B cell (primary cell): ENCODE measurements at regions of chr9 and their contacts with region 1.

Region 1: DNA sequence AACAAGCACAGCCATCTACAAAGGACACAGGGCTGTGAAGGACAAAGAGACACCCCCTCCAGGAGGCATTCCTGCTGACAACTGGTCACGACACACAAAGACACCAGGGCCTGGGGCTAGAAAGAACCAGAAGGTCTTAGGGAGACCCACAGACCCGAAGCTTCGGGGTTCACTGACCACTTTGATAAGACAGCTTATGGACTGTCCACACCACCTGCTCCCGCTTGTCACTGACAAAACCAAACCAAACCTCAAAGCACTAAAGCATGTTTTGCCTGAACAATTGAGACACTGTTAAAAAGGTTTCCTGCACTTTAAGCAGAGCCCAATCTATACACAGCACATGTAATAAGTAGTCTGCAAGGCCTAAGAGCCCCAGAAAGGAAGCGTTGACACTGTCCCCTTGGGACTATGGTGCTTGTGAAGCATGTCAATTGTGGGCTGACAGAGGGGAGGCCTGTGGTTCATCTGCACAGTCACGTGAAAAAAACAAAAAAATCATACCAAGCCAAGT is 185.0 kb downstream of the GAPVD1 start:
- DNase-seq: peak; percentile 94
- ATAC-seq: peak; percentile 100
- H3K4me3 ChIP-seq: peak overlapping the region in 1 of 5 experiments; percentile 14
- H3K4me3 Mint-ChIP-seq: peak overlapping the region; percentile 71
- H3K27ac ChIP-seq: peak overlapping the region in 1 of 2 donors; percentile 11
- H3K27ac Mint-ChIP-seq: peak overlapping the region; percentile 83
- H3K4me1 ChIP-seq: peaks cover 35 to 43% of the 10 kb centered on the region in 2 donors
- H3K4me1 Mint-ChIP-seq: peaks cover 43% of the 10 kb centered on the region
- H3K27me3 ChIP-seq: no peaks in the 10 kb centered on the region
- H3K27me3 Mint-ChIP-seq: no peaks in the 10 kb centered on the region
- CTCF ChIP-seq: no peak

Region 2: GRCh38 chr9:124940693-124941453 is 505.8 kb before region 1 on chr9 and contains the start of gene GOLGA1:
- CTCF ChIA-PET with region 1: no interaction called
- POLR2A ChIA-PET with region 1: no interaction called
- intact Hi-C with region 1: loop called (anchors 5 kb)
- DNase-seq: peak; percentile 98
- ATAC-seq: peak; percentile 88
- H3K4me3 ChIP-seq: peak within 1 kb of the TSS; percentile 73 to 95 (median 91)
- H3K4me3 Mint-ChIP-seq: peak within 1 kb of the TSS; percentile 85
- H3K27ac ChIP-seq: peak within 1 kb of the TSS; percentile 98
- H3K27ac Mint-ChIP-seq: peak within 1 kb of the TSS; percentile 90
- H3K4me1 ChIP-seq: peaks cover 16 to 17% of the 10 kb centered on the region in 2 donors
- H3K4me1 Mint-ChIP-seq: peaks cover 26% of the 10 kb centered on the region
- H3K27me3 ChIP-seq: no peaks in the 10 kb centered on the region
- H3K27me3 Mint-ChIP-seq: no peaks in the 10 kb centered on the region
- CTCF ChIP-seq: no peak
- total RNA-seq, gene GOLGA1: 24.6 and 26.2 TPM in 2 replicates

Region 3: DNA sequence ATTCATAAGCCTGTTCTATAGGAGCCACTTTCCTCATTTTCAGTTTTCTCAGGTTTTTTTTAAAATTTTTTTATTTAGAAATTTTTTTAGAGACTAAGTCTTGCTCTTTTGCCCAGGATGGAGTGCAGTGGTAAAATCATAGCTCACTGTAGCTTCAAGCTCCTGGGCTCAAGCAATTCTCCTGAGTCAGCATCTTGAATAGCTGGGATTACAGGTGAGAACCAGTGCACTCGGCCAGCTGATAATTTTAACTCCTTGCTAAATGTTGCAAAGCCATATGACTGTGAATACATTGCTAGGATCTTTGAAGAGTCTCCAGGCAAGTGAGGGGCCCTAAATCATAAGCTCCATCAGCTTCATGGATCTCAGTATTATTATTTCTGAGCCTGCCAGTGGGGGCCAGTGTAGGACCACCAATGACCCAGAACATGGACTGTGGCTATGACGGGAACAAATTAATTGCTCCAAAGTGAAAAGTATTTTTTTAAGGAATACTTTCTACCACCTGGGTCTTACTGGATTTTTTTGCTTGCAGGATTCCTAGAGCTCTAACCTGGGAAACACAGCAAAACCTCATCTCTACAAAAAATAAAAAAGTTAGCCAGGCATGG is 190.8 kb before region 1 on chr9:
- CTCF ChIA-PET with region 1: no interaction called
- POLR2A ChIA-PET with region 1: no interaction called
- intact Hi-C with region 1: no loop called
- DNase-seq: no peak
- ATAC-seq: no peak
- H3K4me3 ChIP-seq: no peak overlapping the region
- H3K4me3 Mint-ChIP-seq: no peak overlapping the region
- H3K27ac ChIP-seq: no peak overlapping the region
- H3K27ac Mint-ChIP-seq: no peak overlapping the region
- H3K4me1 ChIP-seq: peaks cover 0 to 4% of the 10 kb centered on the region in 2 donors
- H3K4me1 Mint-ChIP-seq: peaks cover 7% of the 10 kb centered on the region
- H3K27me3 ChIP-seq: no peaks in the 10 kb centered on the region
- H3K27me3 Mint-ChIP-seq: no peaks in the 10 kb centered on the region
- CTCF ChIP-seq: no peak

Region 4: DNA sequence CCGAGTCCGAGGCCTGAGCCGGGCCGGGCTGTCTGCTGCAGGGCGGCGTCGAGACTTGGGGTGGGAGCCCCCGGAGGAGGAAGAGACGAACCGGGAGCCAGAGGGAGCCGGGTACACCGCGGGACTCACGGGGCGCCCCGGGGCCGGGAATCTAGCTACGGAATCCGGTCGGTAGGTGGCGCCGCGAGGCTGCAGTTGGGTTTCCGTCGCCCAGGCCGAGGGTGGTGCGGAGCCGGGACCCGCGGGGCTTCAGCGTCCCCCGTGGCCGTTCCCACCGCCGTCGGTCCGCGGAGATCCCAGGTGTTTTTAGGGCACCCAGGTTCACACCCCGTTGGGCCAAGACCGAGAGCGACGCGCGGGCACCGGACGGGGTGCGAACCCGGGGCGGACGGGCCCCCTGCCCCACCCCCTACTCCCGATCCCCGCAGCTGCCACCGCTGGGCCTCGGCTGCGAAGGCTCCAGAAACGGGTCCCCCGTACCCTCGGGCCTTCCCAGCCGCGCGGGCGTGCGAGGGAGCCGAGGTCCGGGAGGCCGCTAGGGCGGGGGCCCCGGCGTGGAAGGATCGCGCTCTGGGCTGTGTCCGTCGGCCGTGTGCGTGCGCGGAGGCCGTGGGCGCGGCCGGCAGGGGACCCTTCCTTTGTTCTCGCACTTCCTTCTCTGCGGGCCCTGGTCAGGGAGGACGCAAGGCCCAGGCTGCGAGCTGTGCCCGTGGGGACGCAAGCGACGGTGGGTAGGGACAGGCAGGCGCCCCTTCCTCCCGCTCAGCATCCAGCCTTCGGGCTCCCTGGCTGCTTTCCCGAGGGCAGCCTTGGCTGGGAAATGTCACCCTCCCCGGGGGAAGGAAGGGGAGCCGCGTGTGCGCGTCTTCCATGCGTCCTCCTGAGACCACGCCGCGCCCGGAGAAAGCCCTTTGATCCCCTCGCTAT is 38.4 kb before region 1 on chr9:
- CTCF ChIA-PET with region 1: interaction called, 4 read pairs
- POLR2A ChIA-PET with region 1: no interaction called
- intact Hi-C with region 1: loop called (anchors 1 kb)
- DNase-seq: peak; percentile 87
- ATAC-seq: peak; percentile 81
- H3K4me3 ChIP-seq: peak overlapping the region; percentile 5 to 68 (median 51)
- H3K4me3 Mint-ChIP-seq: peak overlapping the region; percentile 80
- H3K27ac ChIP-seq: peak overlapping the region in 1 of 2 donors; percentile 15
- H3K27ac Mint-ChIP-seq: no peak overlapping the region
- H3K4me1 ChIP-seq: peaks cover 10 to 19% of the 10 kb centered on the region in 2 donors
- H3K4me1 Mint-ChIP-seq: peaks cover 16% of the 10 kb centered on the region
- H3K27me3 ChIP-seq: peaks cover 0 to 33% (median 9%) of the 10 kb centered on the region in 4 experiments
- H3K27me3 Mint-ChIP-seq: peaks cover 23% of the 10 kb centered on the region
- CTCF ChIP-seq: peak; percentile 93

Region 5: DNA sequence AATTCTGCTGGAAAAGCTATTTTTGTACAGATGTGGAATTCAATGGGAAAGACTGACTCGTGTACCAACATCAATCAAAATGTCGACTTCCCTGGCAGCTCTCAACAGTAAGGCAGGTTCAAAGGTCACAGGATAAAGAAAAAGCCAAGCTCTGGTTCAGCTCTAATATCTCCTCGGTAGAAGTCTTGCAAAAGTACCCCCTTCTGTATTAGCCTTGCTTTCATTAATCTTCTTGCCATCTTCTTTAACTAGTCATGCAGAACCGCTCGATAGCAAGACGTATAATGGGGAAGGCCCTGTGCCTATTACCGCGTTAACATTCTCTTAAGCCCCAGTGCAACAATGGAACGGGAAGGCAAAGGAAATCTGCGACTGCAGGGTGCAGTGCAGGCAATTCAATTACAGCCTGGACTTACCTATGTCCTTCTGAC is 16.2 kb after region 1 on chr9:
- CTCF ChIA-PET with region 1: no interaction called
- POLR2A ChIA-PET with region 1: no interaction called
- intact Hi-C with region 1: no loop called
- DNase-seq: no peak
- ATAC-seq: no peak
- H3K4me3 ChIP-seq: no peak overlapping the region
- H3K4me3 Mint-ChIP-seq: no peak overlapping the region
- H3K27ac ChIP-seq: no peak overlapping the region
- H3K27ac Mint-ChIP-seq: no peak overlapping the region
- H3K4me1 ChIP-seq: no peaks in the 10 kb centered on the region
- H3K4me1 Mint-ChIP-seq: no peaks in the 10 kb centered on the region
- H3K27me3 ChIP-seq: no peaks in the 10 kb centered on the region
- H3K27me3 Mint-ChIP-seq: no peaks in the 10 kb centered on the region
- CTCF ChIP-seq: no peak

Region 6: DNA sequence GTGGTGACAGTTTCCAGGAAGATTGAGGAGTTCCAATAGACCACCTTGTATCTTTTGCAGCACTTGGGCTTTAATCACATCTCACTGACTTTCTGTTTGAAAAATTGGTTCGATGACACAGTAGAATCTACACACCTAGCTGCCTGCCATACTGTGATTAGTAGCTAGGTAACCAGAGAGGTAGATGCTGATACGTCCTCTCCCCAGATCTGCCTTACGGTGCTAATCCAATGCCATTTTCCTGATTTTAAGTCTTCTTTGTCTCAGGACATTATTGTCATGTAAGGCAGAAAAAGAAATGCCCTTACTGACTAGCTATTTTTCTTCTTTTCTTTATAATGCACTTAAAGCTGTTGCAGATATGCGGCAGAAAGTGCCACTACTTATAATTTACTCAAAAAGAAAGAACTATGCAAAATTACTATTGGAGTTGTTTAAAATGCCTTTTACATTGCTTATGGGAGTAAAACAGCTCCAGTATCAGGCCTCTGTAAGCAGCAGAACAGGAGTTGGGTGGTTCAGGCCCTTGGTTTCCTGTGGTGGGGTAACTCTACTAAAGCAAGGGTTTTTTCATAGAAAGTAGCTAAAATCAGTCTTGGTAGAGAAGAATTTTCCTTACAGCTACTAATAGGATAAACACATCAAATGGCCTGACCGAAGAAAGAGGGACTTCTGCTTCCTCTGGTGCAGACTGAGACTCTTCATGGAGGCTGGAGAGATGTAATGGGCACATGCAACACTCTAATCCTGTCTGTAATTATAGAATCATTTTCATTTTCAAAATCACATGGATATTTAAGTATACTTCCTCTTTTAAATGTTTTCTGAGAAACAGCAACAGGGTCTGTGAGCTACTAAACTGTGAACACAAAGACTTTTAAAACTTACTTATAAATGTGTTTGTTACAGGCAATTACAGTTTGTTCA is 83.2 kb after region 1 on chr9:
- CTCF ChIA-PET with region 1: no interaction called
- POLR2A ChIA-PET with region 1: no interaction called
- intact Hi-C with region 1: loop called (anchors 2 kb)
- DNase-seq: peak; percentile 72
- ATAC-seq: peak; percentile 72
- H3K4me3 ChIP-seq: peak overlapping the region in 2 of 5 experiments; percentile 23 to 34
- H3K4me3 Mint-ChIP-seq: peak overlapping the region; percentile 78
- H3K27ac ChIP-seq: peak overlapping the region; percentile 77 to 91
- H3K27ac Mint-ChIP-seq: peak overlapping the region; percentile 81
- H3K4me1 ChIP-seq: peaks cover 59 to 70% of the 10 kb centered on the region in 2 donors
- H3K4me1 Mint-ChIP-seq: peaks cover 65% of the 10 kb centered on the region
- H3K27me3 ChIP-seq: no peaks in the 10 kb centered on the region
- H3K27me3 Mint-ChIP-seq: no peaks in the 10 kb centered on the region
- CTCF ChIP-seq: no peak

Region 7: GRCh38 chr9:125650271-125650737 is 203.7 kb after region 1 on chr9:
- CTCF ChIA-PET with region 1: no interaction called
- POLR2A ChIA-PET with region 1: no interaction called
- intact Hi-C with region 1: loop called (anchors 5 kb)
- DNase-seq: peak; percentile 84
- ATAC-seq: peak; percentile 88
- H3K4me3 ChIP-seq: peak overlapping the region in 4 of 5 experiments; percentile 26 to 55 (median 28)
- H3K4me3 Mint-ChIP-seq: peak overlapping the region; percentile 73
- H3K27ac ChIP-seq: peak overlapping the region; percentile 81 to 95
- H3K27ac Mint-ChIP-seq: peak overlapping the region; percentile 88
- H3K4me1 ChIP-seq: peaks cover 70 to 78% of the 10 kb centered on the region in 2 donors
- H3K4me1 Mint-ChIP-seq: peaks cover 80% of the 10 kb centered on the region
- H3K27me3 ChIP-seq: no peaks in the 10 kb centered on the region
- H3K27me3 Mint-ChIP-seq: no peaks in the 10 kb centered on the region
- CTCF ChIP-seq: no peak

Region 8: DNA sequence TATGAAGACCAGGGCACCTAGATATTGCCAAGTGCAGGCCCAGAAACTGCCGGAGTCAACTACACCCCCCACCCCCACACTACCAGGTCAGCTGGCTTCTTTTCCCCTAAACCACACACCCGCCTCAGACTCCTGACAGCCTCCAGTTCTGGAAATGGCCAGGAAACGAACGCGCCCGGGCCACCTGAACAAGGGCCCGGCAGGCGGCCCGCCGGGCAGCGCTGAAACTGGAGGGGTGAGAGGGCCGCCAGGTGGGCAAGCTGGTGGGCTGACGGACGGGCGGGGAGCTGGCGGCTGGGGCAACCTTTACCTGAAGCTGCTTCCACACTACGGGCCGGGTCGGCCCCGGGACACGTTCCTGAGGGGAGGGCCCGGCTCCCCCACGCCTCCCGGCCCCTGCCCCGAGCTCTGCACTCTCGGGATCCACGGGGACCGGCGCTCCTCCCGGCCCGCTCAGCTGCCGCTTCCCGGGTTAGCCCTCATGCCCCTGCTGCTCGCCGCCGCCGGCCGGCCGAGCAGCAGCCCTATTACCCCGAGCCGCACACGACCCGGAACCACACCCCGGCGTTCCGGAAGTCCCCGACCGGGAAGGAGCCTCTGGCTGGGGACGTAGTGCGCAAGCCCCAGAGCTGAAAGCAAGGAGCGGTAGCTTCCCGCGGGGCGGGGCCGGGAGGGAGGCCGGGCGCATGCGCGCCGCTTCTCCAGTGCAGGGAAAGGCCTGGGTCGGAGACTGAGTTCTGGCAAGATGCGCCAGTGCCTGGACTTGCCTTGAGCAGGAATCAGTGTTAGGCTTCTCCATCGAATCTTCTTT is 260.2 kb after region 1 on chr9 and contains the start of gene MAPKAP1:
- CTCF ChIA-PET with region 1: no interaction called
- POLR2A ChIA-PET with region 1: no interaction called
- intact Hi-C with region 1: loop called (anchors 5 kb)
- DNase-seq: peak; percentile 92
- ATAC-seq: peak; percentile 99
- H3K4me3 ChIP-seq: peak within 1 kb of the TSS; percentile 73 to 93 (median 81)
- H3K4me3 Mint-ChIP-seq: peak within 1 kb of the TSS; percentile 89
- H3K27ac ChIP-seq: peak within 1 kb of the TSS; percentile 75 to 84
- H3K27ac Mint-ChIP-seq: peak within 1 kb of the TSS; percentile 88
- H3K4me1 ChIP-seq: peaks cover 20 to 22% of the 10 kb centered on the region in 2 donors
- H3K4me1 Mint-ChIP-seq: peaks cover 47% of the 10 kb centered on the region
- H3K27me3 ChIP-seq: peaks cover 0 to 2% (median 0%) of the 10 kb centered on the region in 4 experiments
- H3K27me3 Mint-ChIP-seq: peaks cover 3% of the 10 kb centered on the region
- CTCF ChIP-seq: no peak
- total RNA-seq, gene MAPKAP1: 62.4 and 72.1 TPM in 2 replicates